ENCODE measurements at regions of chr13 and their contacts with region 1.

Region 1: DNA sequence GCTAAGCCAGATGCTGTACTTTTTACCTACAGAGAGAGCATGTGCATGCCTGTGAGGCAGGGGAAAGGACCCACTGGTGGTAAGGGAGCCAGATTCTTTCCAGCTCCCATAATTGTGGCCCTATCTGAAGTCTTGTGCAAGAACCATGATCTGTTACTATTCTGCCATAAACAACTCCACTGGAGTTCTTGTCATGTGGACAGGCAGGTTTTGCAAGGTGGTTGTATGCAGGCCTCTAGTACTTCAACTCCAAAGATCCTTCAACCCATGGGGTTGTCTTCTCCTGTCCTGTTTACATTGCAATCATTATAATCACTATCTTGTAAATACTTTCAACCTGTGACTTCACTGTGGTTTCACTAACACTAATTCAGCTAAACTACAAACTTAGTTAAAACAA is 14.1 kb downstream of the PROSER1 start:
- DNase-seq: no peak
- H3K4me3 Mint-ChIP-seq: no peak overlapping the region
- H3K27ac Mint-ChIP-seq: peak overlapping the region; percentile 23
- H3K4me1 Mint-ChIP-seq: no peaks in the 10 kb centered on the region
- H3K27me3 Mint-ChIP-seq: no peaks in the 10 kb centered on the region
- CTCF ChIP-seq: no peak

Region 2: DNA sequence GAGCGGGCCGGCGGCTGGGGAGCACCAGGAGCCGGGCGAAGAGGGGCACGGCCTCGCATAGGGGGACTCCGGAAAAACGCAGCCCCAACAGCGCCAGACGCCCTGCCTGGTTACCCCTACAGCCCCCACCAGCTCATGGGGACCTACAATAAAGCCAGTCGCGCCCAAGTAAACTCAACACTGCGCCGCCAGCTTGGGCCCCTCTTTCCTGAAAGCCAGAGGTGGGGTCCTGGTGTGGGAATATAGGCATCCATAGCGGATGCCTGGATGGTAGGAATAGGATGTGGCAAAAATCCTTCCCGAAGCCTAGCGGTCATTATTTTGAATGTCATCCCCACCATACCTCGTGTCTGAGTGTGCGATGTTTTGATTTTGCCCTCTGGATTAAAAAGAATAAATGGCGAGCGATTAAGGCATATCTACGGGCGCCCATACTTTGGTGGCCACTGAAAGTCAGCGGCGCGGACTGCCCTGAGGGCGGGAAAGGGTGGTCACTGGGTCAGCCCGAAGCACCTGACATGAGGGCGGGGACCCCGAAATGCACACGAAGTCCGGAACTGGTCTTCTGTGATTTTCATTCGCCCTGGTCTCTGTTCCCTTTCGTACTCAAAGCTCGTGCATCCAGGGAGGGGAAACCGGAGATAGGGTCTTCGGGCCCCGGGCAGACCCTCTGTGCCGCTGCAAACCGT is 14.2 kb after region 1 on chr13 and contains the starts of genes NHLRC3 and PROSER1:
- CTCF ChIA-PET with region 1: interaction called, 3 read pairs
- POLR2A ChIA-PET with region 1: interaction called, 10 read pairs
- intact Hi-C with region 1: no loop called
- DNase-seq: peak; percentile 96
- H3K4me3 Mint-ChIP-seq: peak within 1 kb of the TSS; percentile 97
- H3K27ac Mint-ChIP-seq: peak within 1 kb of the TSS; percentile 35
- H3K4me1 Mint-ChIP-seq: peaks cover 6% of the 10 kb centered on the region
- H3K27me3 Mint-ChIP-seq: no peaks in the 10 kb centered on the region
- CTCF ChIP-seq: no peak
- total RNA-seq, gene NHLRC3: 11.3 and 13.2 TPM in 2 replicates
- total RNA-seq, gene PROSER1: 53.4 and 58.2 TPM in 2 replicates

Measured in MCF 10A (cell line).